A549 (cell line): ENCODE measurements at regions of chr10 and their contacts with region 1.

Region 1: GRCh38 chr10:68423522-68423921 is 16.4 kb upstream of the RUFY2 start:
- DNase-seq: no peak
- ATAC-seq: no peak
- H3K4me3 ChIP-seq: no peak overlapping the region
- H3K27ac ChIP-seq: no peak overlapping the region
- H3K4me1 ChIP-seq: no peaks in the 10 kb centered on the region
- CTCF ChIP-seq: no peak
- EP300 ChIP-seq: no peak
- POLR2A ChIP-seq: no peak
- RAD21 ChIP-seq: no peak

Region 2: GRCh38 chr10:68406815-68407548 is 16.5 kb before region 1 on chr10 and contains the start of gene RUFY2:
- CTCF ChIA-PET with region 1: interaction called, 17 read pairs
- POLR2A ChIA-PET with region 1: no interaction called
- DNase-seq: peak; percentile 59 to 84
- ATAC-seq: peak; percentile 94 to 96
- H3K4me3 ChIP-seq: peak within 1 kb of the TSS; percentile 80
- H3K27ac ChIP-seq: peak within 1 kb of the TSS; percentile 91 to 96
- H3K4me1 ChIP-seq: peaks cover 25% of the 10 kb centered on the region
- CTCF ChIP-seq: peak; percentile 94
- EP300 ChIP-seq: no peak
- POLR2A ChIP-seq: peak; percentile 65
- RAD21 ChIP-seq: 0 out of 5 replicates have a peak, but pooled peaks of 1 of the 2 experiments have one; percentile 21
- polyA plus RNA-seq, gene RUFY2: 14.6 and 20.3 TPM in 2 replicates